ENCODE measurements at regions of chr3 and their contacts with region 1.

Region 1: GRCh38 chr3:107676469-107677309 is 153.9 kb downstream of the BBX start:
- DNase-seq: no peak
- H3K4me3 ChIP-seq: no peak overlapping the region
- H3K27ac ChIP-seq: no peak overlapping the region
- H3K4me1 ChIP-seq: no peaks in the 10 kb centered on the region
- H3K27me3 ChIP-seq: no peaks in the 10 kb centered on the region
- CTCF ChIP-seq: peak in 1 of 3 experiments; percentile 34; a peak in 2 of 4 replicates
- EP300 ChIP-seq: no peak
- POLR2A ChIP-seq: no peak
- RAD21 ChIP-seq: peak in 1 of 2 experiments; percentile 42; a peak in 3 of 4 replicates

Region 2: GRCh38 chr3:107574650-107575049 is 102.0 kb before region 1 on chr3:
- CTCF ChIA-PET with region 1: interaction called, 31 read pairs
- POLR2A ChIA-PET with region 1: no interaction called
- DNase-seq: no peak
- H3K4me3 ChIP-seq: no peak overlapping the region
- H3K27ac ChIP-seq: no peak overlapping the region
- H3K4me1 ChIP-seq: peaks cover 2 to 10% (median 8%) of the 10 kb centered on the region in 4 experiments; a peak in 4 of 7 replicates
- H3K27me3 ChIP-seq: no peaks in the 10 kb centered on the region
- CTCF ChIP-seq: peak in 2 of 3 experiments; percentile 44 to 54; a peak in 2 of 4 replicates
- EP300 ChIP-seq: no peak
- POLR2A ChIP-seq: no peak
- RAD21 ChIP-seq: peak; percentile 78

Region 3: GRCh38 chr3:107660306-107660976 is 16.2 kb before region 1 on chr3:
- CTCF ChIA-PET with region 1: interaction called, 121 read pairs
- POLR2A ChIA-PET with region 1: interaction called, 4 read pairs
- DNase-seq: no peak
- H3K4me3 ChIP-seq: no peak overlapping the region
- H3K27ac ChIP-seq: no peak overlapping the region
- H3K4me1 ChIP-seq: peaks cover 0 to 9% (median under 1%) of the 10 kb centered on the region in 4 experiments; a peak in 3 of 7 replicates
- H3K27me3 ChIP-seq: no peaks in the 10 kb centered on the region
- CTCF ChIP-seq: peak in 1 of 3 experiments; percentile 48; a peak in 1 of 4 replicates
- EP300 ChIP-seq: no peak
- POLR2A ChIP-seq: no peak
- RAD21 ChIP-seq: peak in 1 of 2 experiments; percentile 48; a peak in 3 of 4 replicates

Region 4: DNA sequence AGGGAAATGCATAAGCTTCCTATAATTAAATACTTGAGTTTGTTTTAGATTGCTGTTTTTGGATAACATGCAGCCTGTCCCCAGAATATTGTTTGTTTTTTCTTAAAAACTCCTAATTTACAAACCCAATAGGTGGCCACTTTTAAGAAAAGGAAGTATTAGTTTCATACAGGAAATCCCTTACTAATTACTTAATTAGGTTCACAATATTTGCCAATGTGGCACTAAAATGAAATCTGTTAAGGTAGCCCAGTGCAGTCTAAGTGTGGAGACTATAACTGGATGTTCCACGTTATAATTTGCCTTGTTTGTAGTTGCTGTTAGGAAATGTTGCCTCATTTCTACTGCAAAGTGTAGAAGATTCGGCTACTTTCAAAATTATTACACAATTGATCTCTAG is 41.9 kb after region 1 on chr3:
- CTCF ChIA-PET with region 1: interaction called, 13 read pairs
- POLR2A ChIA-PET with region 1: no interaction called
- DNase-seq: no peak
- H3K4me3 ChIP-seq: no peak overlapping the region
- H3K27ac ChIP-seq: no peak overlapping the region
- H3K4me1 ChIP-seq: no peaks in the 10 kb centered on the region
- H3K27me3 ChIP-seq: no peaks in the 10 kb centered on the region
- CTCF ChIP-seq: no peak
- EP300 ChIP-seq: no peak
- POLR2A ChIP-seq: no peak
- RAD21 ChIP-seq: no peak

Region 5: GRCh38 chr3:107740992-107741896 is 64.6 kb after region 1 on chr3:
- CTCF ChIA-PET with region 1: interaction called, 97 read pairs
- POLR2A ChIA-PET with region 1: no interaction called
- DNase-seq: no peak
- H3K4me3 ChIP-seq: no peak overlapping the region
- H3K27ac ChIP-seq: no peak overlapping the region
- H3K4me1 ChIP-seq: no peaks in the 10 kb centered on the region
- H3K27me3 ChIP-seq: no peaks in the 10 kb centered on the region
- CTCF ChIP-seq: peak in 1 of 3 experiments; percentile 30; a peak in 1 of 4 replicates
- EP300 ChIP-seq: no peak
- POLR2A ChIP-seq: no peak
- RAD21 ChIP-seq: peak in 1 of 2 experiments; percentile 64; a peak in 3 of 4 replicates